ENCODE measurements at regions of chr17 and their contacts with region 1.

Region 1: GRCh38 chr17:37373530-37374159 is 2.1 kb upstream of the C17orf78 start:
- DNase-seq: peak; percentile 42
- H3K4me3 ChIP-seq: no peak overlapping the region
- CTCF ChIP-seq: peak; percentile 99

Region 2: DNA sequence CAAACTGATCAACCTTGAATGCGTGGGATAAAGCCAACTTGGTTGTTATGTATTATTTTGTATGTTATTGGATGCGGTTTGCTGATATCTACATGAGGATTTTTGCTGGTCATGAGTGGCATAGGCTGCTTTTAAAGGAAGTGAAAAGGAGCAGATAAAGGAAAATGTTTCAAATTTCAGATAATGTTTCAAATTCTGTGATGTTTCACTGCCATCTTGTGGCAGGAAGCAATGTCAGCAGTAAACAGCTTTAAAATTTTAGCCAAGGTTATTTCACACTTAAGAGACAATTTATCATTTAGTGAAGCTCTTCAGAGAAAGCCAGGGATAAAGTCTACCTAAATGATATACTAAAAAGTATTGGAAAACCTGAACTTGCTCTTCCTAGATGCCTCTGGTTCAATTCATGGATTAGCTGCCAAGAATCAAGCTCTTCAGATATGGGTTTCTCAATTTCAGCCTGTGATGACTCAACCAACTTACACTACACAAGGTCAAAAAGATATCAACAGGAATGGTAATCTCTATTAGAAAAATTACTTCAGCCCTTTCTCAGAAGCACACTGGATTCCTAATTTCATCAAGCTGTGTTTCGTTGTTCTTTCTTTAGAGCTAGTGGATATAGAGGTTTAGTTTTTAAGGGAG is 133.8 kb before region 1 on chr17:
- CTCF ChIA-PET with region 1: interaction called, 12 read pairs
- POLR2A ChIA-PET with region 1: no interaction called
- DNase-seq: no peak
- H3K4me3 ChIP-seq: no peak overlapping the region
- CTCF ChIP-seq: peak; percentile 58

Region 3: DNA sequence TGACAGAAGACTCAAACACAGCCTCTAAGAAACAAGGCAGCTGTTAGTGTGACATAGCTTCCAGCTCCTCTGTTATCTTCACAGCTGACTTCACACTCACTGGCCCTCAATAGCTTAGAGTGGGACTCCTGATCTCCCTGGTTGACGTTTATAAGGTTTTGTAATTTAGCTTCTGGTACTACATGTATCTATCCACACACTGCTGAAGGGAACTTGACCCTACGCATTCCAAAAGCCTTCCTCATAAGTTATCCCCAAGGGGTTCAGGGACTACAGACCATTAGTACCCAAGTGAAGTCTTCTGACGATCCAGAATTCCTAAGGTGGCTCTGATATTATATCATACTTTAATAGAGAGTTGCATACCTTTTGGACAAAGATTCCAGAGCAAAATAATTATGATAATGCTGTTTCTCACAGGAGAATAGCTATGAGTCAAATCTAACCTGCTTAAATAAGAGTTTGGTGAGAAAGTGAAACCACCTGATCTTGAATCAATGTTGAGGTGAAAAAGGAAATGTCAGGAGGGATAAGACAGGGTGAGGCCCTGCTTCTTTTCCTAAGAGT is 18.5 kb after region 1 on chr17:
- CTCF ChIA-PET with region 1: interaction called, 189 read pairs
- POLR2A ChIA-PET with region 1: no interaction called
- DNase-seq: peak; percentile 80
- H3K4me3 ChIP-seq: peak overlapping the region; percentile 6
- CTCF ChIP-seq: no peak

Region 4: DNA sequence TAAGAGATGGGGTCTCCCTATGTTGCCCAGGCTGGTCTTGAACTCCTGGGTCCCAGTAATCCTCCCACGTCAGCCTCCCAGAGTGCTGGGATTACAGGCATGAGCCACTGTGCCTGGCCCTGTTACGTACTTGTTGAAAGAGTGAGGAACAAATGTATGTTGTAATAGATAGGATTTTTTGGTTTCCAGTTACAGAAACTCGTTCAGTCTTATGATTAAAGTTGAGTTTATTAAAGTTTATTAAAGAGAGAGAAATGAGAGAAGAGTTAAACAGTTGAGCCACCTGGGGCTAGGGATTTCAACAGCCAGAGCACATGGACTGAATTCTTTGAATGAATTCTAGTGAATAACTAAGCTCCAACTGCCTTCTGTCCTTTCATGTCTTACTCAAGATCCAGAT is 36.7 kb after region 1 on chr17:
- CTCF ChIA-PET with region 1: interaction called, 10 read pairs
- POLR2A ChIA-PET with region 1: no interaction called
- DNase-seq: no peak
- H3K4me3 ChIP-seq: no peak overlapping the region
- CTCF ChIP-seq: no peak

Region 5: DNA sequence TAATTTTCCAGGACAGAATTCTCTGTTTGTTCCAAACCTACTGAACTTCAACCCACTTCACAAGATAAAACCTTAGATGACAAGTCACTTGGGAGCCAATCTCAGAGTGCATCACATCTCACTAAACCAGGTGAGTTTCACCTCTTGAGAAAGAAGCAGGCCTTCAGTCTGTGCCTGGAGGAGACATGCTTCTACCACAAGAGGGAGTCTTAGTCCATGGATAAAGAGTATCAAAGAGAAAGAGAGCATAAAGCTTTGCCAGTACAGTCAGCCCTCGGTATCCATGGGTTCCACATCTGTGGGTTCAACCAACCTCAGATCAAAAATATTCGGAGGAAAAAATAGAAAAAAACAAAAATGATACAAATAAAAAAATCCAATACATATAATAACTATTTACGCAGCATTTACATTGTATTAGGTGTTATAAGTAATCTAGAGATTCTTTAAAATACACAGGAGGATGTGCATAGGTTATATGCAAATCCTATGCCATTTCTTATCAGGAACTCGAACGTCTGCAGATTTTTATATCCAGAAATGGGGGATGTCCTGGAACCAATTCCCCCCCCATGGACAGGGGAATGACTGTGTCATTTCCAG is 153.7 kb after region 1 on chr17:
- CTCF ChIA-PET with region 1: interaction called, 14 read pairs
- POLR2A ChIA-PET with region 1: no interaction called
- DNase-seq: no peak
- H3K4me3 ChIP-seq: no peak overlapping the region
- CTCF ChIP-seq: peak; percentile 67